ENCODE measurements at regions of chr13 and their contacts with region 1.

Region 1: GRCh38 chr13:100680131-100680530 is 5.5 kb upstream of the TMTC4 start:
- DNase-seq: no peak
- ATAC-seq: no peak
- H3K4me3 Mint-ChIP-seq: no peak overlapping the region
- H3K27ac Mint-ChIP-seq: no peak overlapping the region
- H3K4me1 Mint-ChIP-seq: peaks cover 7% of the 10 kb centered on the region
- H3K27me3 Mint-ChIP-seq: peaks cover 3% of the 10 kb centered on the region
- CTCF ChIP-seq: no peak

Region 2: GRCh38 chr13:100581504-100581903 is 98.6 kb before region 1 on chr13:
- CTCF ChIA-PET with region 1: no interaction called
- POLR2A ChIA-PET with region 1: interaction called, 10 read pairs
- intact Hi-C with region 1: no loop called
- DNase-seq: no peak
- ATAC-seq: no peak
- H3K4me3 Mint-ChIP-seq: no peak overlapping the region
- H3K27ac Mint-ChIP-seq: no peak overlapping the region
- H3K4me1 Mint-ChIP-seq: no peaks in the 10 kb centered on the region
- H3K27me3 Mint-ChIP-seq: no peaks in the 10 kb centered on the region
- CTCF ChIP-seq: no peak

Region 3: GRCh38 chr13:100694722-100695508 is 14.8 kb after region 1 on chr13:
- CTCF ChIA-PET with region 1: no interaction called
- POLR2A ChIA-PET with region 1: no interaction called
- intact Hi-C with region 1: no loop called
- DNase-seq: no peak
- ATAC-seq: no peak
- H3K4me3 Mint-ChIP-seq: no peak overlapping the region
- H3K27ac Mint-ChIP-seq: no peak overlapping the region
- H3K4me1 Mint-ChIP-seq: no peaks in the 10 kb centered on the region
- H3K27me3 Mint-ChIP-seq: peaks cover 14% of the 10 kb centered on the region
- CTCF ChIP-seq: no peak

Measured in activated B cell treated with CpG ODN at 0.5 μM for 24 hours (primary cell).